ENCODE measurements at regions of chr11 and their contacts with region 1.

Region 1: GRCh38 chr11:130894322-130895025 is 21.8 kb downstream of the SNX19 start:
- DNase-seq: peak; percentile 88
- H3K4me3 ChIP-seq: no peak overlapping the region
- H3K27ac ChIP-seq: peak overlapping the region; percentile 87 to 95 (median 90)
- H3K4me1 ChIP-seq: peaks cover 0 to 77% (median 63%) of the 10 kb centered on the region in 4 donors
- H3K27me3 ChIP-seq: no peaks in the 10 kb centered on the region
- CTCF ChIP-seq: peak; percentile 80 to 92 (median 87)
- EP300 ChIP-seq: no peak
- POLR2A ChIP-seq: no peak

Region 2: GRCh38 chr11:130002846-130003716 is 891.4 kb before region 1 on chr11:
- intact Hi-C with region 1: loop called (anchors 10 kb)
- DNase-seq: peak; percentile 98
- H3K4me3 ChIP-seq: peak overlapping the region; percentile 55 to 96 (median 92)
- H3K27ac ChIP-seq: peak overlapping the region; percentile 97 to 99 (median 98)
- H3K4me1 ChIP-seq: peaks cover 0 to 27% (median 22%) of the 10 kb centered on the region in 4 donors
- H3K27me3 ChIP-seq: no peaks in the 10 kb centered on the region
- CTCF ChIP-seq: no peak
- EP300 ChIP-seq: no peak
- POLR2A ChIP-seq: peak; percentile 33 to 69

Region 3: GRCh38 chr11:130314750-130315285 is 579.7 kb before region 1 on chr11 and contains the start of gene ZBTB44:
- intact Hi-C with region 1: loop called (anchors 10 kb)
- DNase-seq: peak; percentile 96
- H3K4me3 ChIP-seq: peak within 1 kb of the TSS; percentile 67 to 92 (median 72)
- H3K27ac ChIP-seq: peak within 1 kb of the TSS; percentile 86 to 96 (median 93)
- H3K4me1 ChIP-seq: peaks cover 0 to 42% (median 35%) of the 10 kb centered on the region in 4 donors
- H3K27me3 ChIP-seq: no peaks in the 10 kb centered on the region
- CTCF ChIP-seq: no peak
- EP300 ChIP-seq: no peak
- POLR2A ChIP-seq: peak; percentile 10 to 25
- total RNA-seq, gene ZBTB44: 73.0 to 162 (median 117) TPM

Region 4: GRCh38 chr11:130434521-130435223 is 459.8 kb before region 1 on chr11:
- intact Hi-C with region 1: loop called (anchors 1 kb)
- DNase-seq: peak; percentile 90
- H3K4me3 ChIP-seq: peak overlapping the region; percentile 41 to 62 (median 53)
- H3K27ac ChIP-seq: peak overlapping the region; percentile 77 to 86 (median 80)
- H3K4me1 ChIP-seq: peaks cover 0 to 19% (median 14%) of the 10 kb centered on the region in 4 donors
- H3K27me3 ChIP-seq: no peaks in the 10 kb centered on the region
- CTCF ChIP-seq: peak; percentile 70 to 87 (median 82)
- EP300 ChIP-seq: no peak
- POLR2A ChIP-seq: no peak

Region 5: DNA sequence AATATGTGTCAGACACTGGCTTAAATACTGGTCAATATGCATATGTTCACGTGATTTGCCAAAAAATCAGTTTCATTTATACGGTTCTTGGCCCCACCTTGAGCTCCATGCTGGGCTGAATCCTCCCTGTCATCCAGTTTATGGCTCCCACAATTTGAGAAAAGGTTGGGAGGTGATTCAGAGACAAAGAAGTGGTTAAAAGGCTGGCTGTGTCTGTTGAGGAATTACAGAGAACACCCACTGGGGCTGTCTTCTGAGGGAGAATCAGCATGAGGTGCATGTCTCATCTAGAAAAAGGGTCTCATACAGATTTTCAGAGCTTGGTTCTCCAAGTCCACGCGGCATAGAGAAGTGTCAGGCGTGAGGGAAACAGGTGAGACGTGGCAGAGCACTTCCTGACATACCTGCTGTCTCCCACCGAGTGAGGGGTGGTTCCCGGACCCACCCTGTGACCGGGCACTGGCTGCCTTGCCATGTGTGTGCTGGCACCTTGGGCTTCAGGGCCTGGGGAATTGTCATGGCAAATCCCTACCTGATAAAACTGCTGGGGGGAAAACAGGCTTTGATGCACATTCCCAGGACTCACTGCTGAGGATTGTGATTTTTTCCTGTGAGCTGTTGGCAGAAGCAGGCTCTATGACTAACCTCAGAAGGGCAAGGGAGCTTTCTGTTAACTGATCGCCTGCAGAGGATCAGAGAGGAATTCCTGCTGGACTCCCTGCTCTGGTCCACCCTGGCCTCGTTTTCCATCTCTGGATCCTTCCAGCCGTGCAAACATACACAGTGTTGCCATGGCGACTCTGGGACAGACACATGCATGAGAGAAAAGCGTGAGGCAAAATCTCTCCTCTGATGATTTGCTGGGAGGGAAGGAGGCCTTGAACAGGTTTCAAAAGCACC is 222.4 kb before region 1 on chr11:
- intact Hi-C with region 1: loop called (anchors 10 kb)
- DNase-seq: peak; percentile 92
- H3K4me3 ChIP-seq: no peak overlapping the region
- H3K27ac ChIP-seq: peak overlapping the region; percentile 72 to 87 (median 82)
- H3K4me1 ChIP-seq: peaks cover 0 to 71% (median 65%) of the 10 kb centered on the region in 4 donors
- H3K27me3 ChIP-seq: no peaks in the 10 kb centered on the region
- CTCF ChIP-seq: no peak
- EP300 ChIP-seq: peak in 2 of 4 donors; percentile 61 to 62
- POLR2A ChIP-seq: no peak

Region 6: GRCh38 chr11:131136486-131136885 is 242.0 kb after region 1 on chr11:
- intact Hi-C with region 1: no loop called
- DNase-seq: no peak
- H3K4me3 ChIP-seq: no peak overlapping the region
- H3K27ac ChIP-seq: no peak overlapping the region
- H3K4me1 ChIP-seq: no peaks in the 10 kb centered on the region
- H3K27me3 ChIP-seq: no peaks in the 10 kb centered on the region
- CTCF ChIP-seq: no peak
- EP300 ChIP-seq: no peak
- POLR2A ChIP-seq: no peak